Activated T-helper 1 cell treated with anti-CD3 and anti-CD28 coated beads, Interleukin-12 subunit alpha, Interleukin-12 subunit beta, Interleukin-2, Interleukin-4 antibody, amounts not matched to agents 30 ng/mL and 10 ng/mL and 1 ng/mL, durations not matched to agents 14 hours and 24 hours and 36 hours (primary cell): ENCODE measurements at regions of chr3 and their contacts with region 1.

Region 1: DNA sequence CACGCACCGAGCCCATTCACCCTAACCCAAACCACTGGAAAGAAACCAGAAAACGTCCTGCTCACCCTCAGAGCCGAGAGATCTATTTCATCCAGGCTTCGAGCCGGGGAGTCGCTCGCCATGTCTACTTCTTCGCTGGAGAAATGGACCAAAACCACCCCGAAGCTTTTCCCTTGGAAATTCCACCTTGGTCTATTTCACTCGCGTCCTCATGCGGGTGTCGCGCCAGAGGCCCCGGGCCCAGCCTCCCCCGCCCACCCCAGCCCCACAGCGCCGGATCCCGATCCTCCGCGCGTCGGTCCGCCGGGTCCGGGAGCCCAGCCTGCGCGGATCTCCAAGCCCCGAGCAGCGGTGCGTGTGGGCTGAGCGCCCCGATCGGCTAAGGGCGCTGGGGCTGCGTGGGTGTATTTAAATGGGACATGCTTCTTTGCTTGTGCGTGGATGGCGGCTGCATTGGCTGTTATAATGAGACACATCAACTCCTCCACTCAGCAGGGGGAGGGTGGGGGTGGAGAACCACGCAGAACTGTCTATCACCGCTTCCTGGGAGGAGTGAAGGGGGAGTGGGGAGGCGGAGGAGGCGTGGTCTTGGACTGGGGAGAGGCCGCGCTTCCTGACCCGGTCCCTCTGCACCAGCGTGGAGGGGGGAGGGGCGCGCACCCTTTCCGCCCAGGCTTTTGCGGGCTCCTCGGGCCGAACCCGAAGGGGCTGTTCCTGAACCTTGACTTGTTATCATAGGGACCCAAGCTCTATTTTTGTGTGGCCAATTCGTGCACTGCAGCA is at the start of gene TNIK:
- DNase-seq: peak; percentile 92
- H3K4me3 Mint-ChIP-seq: peak within 1 kb of the TSS; percentile 96
- H3K27ac Mint-ChIP-seq: peak within 1 kb of the TSS; percentile 91
- H3K4me1 Mint-ChIP-seq: peaks cover 55% of the 10 kb centered on the region
- H3K27me3 Mint-ChIP-seq: no peaks in the 10 kb centered on the region
- total RNA-seq, gene TNIK: 21.0 and 21.5 TPM in 2 replicates

Region 2: GRCh38 chr3:169772897-169773828 is 1687.0 kb before region 1 on chr3 and contains the start of gene MYNN:
- intact Hi-C with region 1: loop called (anchors 5 kb)
- DNase-seq: peak; percentile 91
- H3K4me3 Mint-ChIP-seq: peak within 1 kb of the TSS; percentile 97
- H3K27ac Mint-ChIP-seq: peak within 1 kb of the TSS; percentile 99
- H3K4me1 Mint-ChIP-seq: peaks cover 56% of the 10 kb centered on the region
- H3K27me3 Mint-ChIP-seq: peaks cover 5% of the 10 kb centered on the region
- total RNA-seq, gene MYNN: 14.5 and 16.8 TPM in 2 replicates

Region 3: GRCh38 chr3:171162986-171163723 is 297.0 kb before region 1 on chr3:
- intact Hi-C with region 1: loop called (anchors 1 kb)
- DNase-seq: no peak
- H3K4me3 Mint-ChIP-seq: no peak overlapping the region
- H3K27ac Mint-ChIP-seq: no peak overlapping the region
- H3K4me1 Mint-ChIP-seq: peaks cover 20% of the 10 kb centered on the region
- H3K27me3 Mint-ChIP-seq: no peaks in the 10 kb centered on the region

Region 4: DNA sequence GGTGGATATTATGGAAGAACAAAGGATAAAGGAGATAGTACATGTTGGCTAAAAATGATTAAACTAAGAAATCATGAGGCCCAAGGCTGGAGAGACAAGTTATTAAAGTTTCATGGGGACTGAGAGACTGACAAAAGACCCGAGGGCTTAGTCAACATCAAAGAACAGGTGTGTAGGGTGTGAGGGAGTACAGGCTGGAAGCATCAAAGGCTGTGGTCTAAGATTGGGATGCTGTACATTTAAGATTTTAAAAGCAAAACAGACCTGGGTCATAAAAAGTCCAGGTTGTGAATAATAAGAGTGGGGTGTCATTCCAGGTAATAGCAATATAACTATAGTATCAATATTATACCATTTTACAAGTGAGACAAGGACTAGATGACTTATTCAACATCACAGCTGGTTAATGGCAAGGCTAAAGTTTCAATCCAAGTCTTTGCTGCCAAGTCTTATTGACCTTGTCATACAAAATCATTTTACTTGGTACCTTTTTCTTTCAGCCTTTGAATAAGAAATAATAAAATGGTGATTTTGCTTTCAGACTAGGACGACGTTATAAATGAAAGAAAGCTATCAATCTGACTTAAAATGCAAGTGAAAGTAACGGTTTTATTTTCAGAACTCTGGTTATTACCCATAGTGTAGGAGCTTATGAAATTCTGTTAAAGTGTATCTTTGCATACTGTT is 211.6 kb before region 1 on chr3:
- intact Hi-C with region 1: loop called (anchors 5 kb)
- DNase-seq: no peak
- H3K4me3 Mint-ChIP-seq: no peak overlapping the region
- H3K27ac Mint-ChIP-seq: no peak overlapping the region
- H3K4me1 Mint-ChIP-seq: peaks cover 16% of the 10 kb centered on the region
- H3K27me3 Mint-ChIP-seq: no peaks in the 10 kb centered on the region

Region 5: DNA sequence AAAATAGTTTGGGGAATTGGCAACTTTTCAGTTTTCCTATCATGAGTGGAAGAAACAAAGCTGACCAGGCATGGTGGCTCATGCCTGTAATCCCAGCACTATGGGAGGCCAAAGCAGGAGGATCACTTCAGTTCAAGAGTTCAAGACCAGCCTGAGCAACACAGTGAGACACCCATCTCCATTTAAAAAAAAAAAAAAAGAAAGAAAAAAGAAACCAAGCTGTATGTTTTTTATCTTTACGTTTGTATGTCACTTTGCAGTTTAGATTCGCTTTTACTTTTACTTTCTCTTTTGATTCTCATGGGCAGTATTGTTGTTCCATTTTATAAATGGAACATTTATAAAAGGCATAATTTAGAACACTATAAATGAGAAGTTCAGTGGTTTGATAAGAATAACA is 31.2 kb after region 1 on chr3:
- intact Hi-C with region 1: loop called (anchors 1 kb)
- DNase-seq: no peak
- H3K4me3 Mint-ChIP-seq: peak overlapping the region; percentile 71
- H3K27ac Mint-ChIP-seq: peak overlapping the region; percentile 67
- H3K4me1 Mint-ChIP-seq: peaks cover 55% of the 10 kb centered on the region
- H3K27me3 Mint-ChIP-seq: no peaks in the 10 kb centered on the region

Region 6: DNA sequence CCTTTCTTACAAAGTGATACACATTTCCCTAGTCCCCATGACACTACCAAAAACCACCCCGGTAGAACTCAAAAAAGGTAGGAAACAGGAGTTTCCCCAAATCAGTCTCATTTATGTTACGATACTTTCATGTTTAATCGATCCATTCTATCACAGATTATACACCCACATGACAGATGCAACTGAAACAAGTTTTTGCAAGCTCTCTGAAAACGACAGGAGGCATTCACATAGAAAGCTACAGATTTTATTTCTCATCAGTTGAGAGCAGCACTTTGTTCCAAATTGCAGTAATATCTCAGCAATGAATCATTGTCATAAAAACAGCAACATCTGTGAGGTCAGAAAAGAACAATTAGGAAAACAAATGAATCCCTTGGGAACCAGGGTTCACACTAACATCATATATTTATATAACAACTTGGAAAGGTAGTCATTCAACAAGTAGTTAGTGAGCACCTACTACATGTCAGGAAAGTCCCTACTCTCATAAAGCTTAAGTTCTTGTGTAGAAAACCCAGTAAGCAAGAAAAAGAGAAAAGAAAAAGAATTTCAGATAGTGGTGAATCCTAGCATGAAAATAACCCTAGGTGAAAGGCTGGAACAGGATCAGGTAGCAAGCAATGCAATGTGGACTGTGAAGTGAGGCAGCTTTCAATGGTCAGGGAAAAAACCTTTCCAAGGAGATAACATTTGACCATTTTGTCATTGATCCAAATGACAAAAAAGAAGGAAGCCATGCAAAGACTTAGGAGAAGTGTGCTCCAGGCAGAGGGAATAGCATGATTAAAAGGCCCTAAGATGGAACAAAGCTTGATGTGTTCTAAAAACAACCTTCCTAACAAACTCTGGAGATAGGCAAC is 341.8 kb after region 1 on chr3:
- intact Hi-C with region 1: no loop called
- DNase-seq: no peak
- H3K4me3 Mint-ChIP-seq: no peak overlapping the region
- H3K27ac Mint-ChIP-seq: no peak overlapping the region
- H3K4me1 Mint-ChIP-seq: no peaks in the 10 kb centered on the region
- H3K27me3 Mint-ChIP-seq: peaks cover 15% of the 10 kb centered on the region

Region 7: DNA sequence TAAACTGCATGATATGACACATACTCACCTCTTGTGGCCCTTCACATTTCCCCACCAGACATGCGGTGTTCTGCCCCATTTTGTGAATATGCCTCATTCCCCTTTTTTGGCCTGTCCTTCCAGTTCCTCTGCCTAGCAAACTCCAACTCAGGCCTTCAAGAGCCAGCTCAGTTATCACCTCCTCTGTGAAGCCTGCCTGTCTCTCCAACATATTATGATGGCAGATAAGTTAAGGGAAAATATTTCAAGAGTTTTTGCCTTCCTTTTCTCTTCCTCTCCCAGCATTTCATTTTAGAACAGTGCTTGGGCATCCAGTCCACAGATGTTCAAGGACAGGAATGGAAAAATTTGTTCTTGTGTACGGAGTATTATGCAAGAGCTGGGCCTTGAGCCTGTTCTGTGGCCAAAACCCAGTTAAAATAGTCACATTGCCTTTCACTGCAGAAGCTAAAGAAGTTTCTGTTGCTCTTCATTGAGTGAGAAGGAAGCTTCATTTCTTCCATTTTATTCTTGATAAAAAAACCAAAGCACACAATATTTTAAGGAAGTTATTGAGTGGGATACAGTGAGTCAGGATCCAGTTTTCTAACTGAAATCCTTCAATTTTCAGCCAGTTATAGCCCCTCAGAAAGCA is 796.1 kb after region 1 on chr3:
- intact Hi-C with region 1: no loop called
- DNase-seq: no peak
- H3K4me3 Mint-ChIP-seq: no peak overlapping the region
- H3K27ac Mint-ChIP-seq: no peak overlapping the region
- H3K4me1 Mint-ChIP-seq: peaks cover 5% of the 10 kb centered on the region
- H3K27me3 Mint-ChIP-seq: no peaks in the 10 kb centered on the region

Region 8: GRCh38 chr3:172511783-172512762 is 1051.9 kb after region 1 on chr3:
- intact Hi-C with region 1: loop called (anchors 10 kb)
- DNase-seq: peak; percentile 69
- H3K4me3 Mint-ChIP-seq: peak overlapping the region; percentile 43
- H3K27ac Mint-ChIP-seq: peak overlapping the region; percentile 88
- H3K4me1 Mint-ChIP-seq: peaks cover 98% of the 10 kb centered on the region
- H3K27me3 Mint-ChIP-seq: no peaks in the 10 kb centered on the region